GM13977 (cell line): ENCODE measurements at regions of chr11 and their contacts with region 1.

Region 1: DNA sequence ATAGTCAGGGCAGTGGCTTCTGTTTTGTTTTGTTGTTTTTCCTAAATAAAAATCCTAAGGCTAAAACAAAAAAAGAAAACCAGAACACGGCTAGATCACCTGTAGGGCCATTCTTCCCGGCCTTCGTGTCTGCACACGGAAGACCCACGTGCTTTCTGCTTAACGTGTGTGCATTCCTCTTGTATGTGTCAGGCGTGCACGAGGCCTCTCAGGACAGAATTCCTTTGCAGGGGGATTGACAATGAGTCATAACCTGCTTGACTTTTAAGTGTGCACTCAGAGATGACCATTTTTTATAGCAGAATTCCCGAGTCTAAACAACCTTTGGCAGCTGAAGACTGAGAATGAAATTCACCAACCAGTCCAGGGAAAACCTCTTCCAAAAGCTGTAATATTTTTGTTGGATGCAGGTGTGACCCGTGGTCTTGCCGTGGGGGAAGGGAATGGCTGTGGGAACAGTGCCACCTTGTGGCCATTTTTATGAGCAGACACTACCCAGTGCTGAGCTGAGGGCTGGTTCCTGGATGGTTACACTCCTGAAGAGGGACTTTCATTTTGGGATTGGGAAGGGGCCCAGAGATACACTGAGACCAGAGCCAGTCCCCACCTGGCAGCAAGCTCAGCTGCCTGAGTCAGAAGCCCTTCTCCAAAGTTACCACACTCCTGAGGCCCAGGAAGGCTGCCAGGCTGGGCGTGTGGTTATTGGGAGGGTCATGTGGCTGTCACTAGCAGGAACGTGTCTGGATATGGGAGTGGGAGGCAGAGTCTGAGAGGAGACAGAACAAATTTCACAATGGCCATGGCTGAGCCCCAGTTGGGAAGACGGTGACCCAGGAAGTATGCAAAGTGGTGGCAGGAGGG is 35.8 kb upstream of the DKK3 start:
- DNase-seq: peak; percentile 63
- CTCF ChIP-seq: peak; percentile 89

Region 2: GRCh38 chr11:11813288-11813962 is 230.8 kb before region 1 on chr11:
- in situ Hi-C with region 1: loop called (anchors 25 kb)
- DNase-seq: no peak
- CTCF ChIP-seq: no peak

Region 3: DNA sequence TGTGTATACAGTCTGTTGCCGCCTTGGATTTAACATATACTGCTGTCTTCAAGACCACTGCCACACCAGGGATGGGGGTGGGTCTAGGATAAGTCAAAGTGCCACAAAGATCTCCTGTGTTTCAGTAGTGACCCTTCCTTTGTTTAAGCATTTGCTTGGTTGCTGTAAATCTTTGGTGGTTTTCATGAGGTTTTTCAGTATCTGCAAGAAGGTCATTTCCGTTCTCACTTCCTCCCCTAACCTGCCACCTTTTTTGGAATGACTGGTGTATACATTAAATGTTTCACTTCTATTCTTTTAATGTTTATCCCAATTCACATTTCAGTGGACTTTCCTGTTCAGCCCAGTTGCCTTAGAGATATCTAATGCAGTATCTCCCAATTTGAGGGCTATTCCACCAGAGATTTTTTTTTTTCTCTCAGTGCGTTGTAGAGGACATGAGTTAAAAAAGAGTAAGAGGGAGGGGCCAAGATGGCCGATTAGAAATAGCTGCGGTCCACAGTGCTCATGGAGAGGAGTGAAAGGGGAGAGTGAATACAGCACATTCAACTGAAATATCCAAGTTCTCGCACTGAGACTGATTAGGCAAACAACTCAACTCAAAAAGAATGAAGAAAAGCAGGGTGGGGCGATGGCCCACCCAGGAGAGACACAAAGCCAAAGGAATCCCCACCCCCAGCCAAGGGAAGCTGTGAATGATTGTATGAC is 159.3 kb before region 1 on chr11:
- in situ Hi-C with region 1: no loop called
- DNase-seq: no peak
- CTCF ChIP-seq: no peak

Region 4: DNA sequence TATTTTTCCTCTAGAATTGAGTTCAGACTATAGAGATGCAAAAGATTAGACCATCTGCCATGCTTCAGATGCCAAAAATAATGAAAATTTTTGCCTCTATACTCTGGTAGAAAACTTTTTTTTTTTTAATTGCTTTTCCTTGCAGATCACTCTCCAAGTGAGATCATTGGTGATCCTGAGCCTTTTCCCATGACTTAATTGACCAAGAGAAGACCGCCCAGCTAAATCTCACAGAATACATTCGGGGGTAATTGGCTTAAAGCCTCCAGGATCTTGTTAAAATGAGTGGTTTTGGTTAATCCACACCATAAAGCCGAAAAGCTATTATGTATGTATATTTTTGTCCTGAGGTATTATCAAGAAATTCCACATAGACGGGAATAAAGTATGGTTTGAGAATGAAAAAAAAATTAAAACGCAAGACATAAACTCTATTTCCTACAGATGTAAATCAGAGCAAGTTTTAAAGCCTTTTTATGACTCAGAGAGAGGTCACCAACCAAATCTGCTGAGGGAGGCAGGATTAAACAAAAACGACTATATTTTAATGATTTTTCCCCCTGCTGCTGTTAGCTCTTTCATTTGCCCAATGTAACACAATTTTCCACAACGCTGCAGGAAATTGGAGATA is 397.2 kb after region 1 on chr11:
- in situ Hi-C with region 1: no loop called
- DNase-seq: no peak
- CTCF ChIP-seq: no peak